ENCODE measurements at regions of chr22 and their contacts with region 1.

Region 1: DNA sequence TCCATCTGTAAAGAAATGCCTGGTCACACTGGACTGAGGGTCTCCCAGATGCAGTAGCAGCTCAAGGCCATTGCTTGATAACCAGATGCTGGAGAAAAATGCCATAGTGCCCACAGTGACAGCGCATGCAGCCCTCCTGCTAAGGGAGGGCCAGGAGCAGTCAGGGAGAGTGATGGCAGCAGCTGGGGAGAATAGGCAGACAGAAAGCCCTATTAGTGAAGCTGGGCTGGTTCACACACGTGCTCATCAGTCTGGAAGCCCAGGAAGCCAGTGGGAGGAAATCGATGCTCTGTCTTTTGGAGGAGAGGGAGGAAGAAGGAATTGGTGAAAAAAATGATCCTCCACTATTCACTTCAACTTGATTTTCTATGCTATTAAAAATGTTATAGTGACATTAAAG is 82.9 kb downstream of the OSBP2 start:
- DNase-seq: no peak
- H3K4me3 ChIP-seq: no peak overlapping the region
- H3K27ac ChIP-seq: no peak overlapping the region
- H3K4me1 ChIP-seq: peaks cover 3% of the 10 kb centered on the region
- H3K27me3 ChIP-seq: no peaks in the 10 kb centered on the region
- CTCF ChIP-seq: no peak
- POLR2A ChIP-seq: no peak

Region 2: GRCh38 chr22:30685178-30685577 is 92.4 kb before region 1 on chr22:
- CTCF ChIA-PET with region 1: no interaction called
- POLR2A ChIA-PET with region 1: no interaction called
- dilution Hi-C with region 1: no loop called
- intact Hi-C with region 1: no loop called
- DNase-seq: no peak
- H3K4me3 ChIP-seq: no peak overlapping the region
- H3K27ac ChIP-seq: no peak overlapping the region
- H3K4me1 ChIP-seq: no peaks in the 10 kb centered on the region
- H3K27me3 ChIP-seq: no peaks in the 10 kb centered on the region
- CTCF ChIP-seq: no peak
- POLR2A ChIP-seq: no peak

Region 3: GRCh38 chr22:30790366-30790765 is 12.8 kb after region 1 on chr22:
- CTCF ChIA-PET with region 1: no interaction called
- POLR2A ChIA-PET with region 1: no interaction called
- dilution Hi-C with region 1: no loop called
- intact Hi-C with region 1: no loop called
- DNase-seq: no peak
- H3K4me3 ChIP-seq: no peak overlapping the region
- H3K27ac ChIP-seq: no peak overlapping the region
- H3K4me1 ChIP-seq: no peaks in the 10 kb centered on the region
- H3K27me3 ChIP-seq: no peaks in the 10 kb centered on the region
- CTCF ChIP-seq: no peak
- POLR2A ChIP-seq: no peak

Region 4: DNA sequence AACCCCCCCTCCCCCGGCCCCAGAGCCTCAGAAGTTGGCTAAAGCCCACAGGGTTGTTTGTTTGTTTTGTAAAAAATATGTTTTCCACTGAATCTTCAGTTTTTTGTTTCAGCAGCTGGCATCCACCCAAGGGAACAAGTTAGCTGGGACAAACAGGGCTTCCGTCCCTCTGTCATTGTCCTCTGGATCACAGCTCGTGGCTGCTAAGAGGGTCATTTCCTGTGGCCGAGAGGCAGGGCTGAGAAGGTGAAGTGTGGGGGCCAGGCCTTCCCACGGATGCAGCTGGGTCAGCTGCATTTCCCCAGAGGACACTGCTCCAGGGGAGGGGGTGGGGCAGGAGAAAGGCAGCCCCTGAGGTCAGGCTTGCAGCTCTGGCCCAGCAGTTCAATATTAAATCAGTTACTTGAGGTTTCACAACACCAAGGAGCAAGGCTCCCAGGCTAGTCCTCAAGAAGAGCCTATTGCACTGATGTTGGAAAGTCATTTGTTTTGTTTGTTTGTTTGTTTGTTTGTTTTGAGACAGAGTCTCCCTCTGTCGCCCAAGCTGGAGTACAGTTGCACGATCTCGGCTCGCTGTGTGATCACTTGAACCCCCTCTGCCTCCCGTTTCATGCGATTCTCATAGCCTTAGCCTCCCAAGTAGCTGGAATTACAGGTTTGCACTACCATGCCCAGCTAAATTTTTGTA is 269.1 kb after region 1 on chr22:
- CTCF ChIA-PET with region 1: no interaction called
- POLR2A ChIA-PET with region 1: no interaction called
- dilution Hi-C with region 1: no loop called
- intact Hi-C with region 1: loop called (anchors 10 kb)
- DNase-seq: peak; percentile 93
- H3K4me3 ChIP-seq: no peak overlapping the region
- H3K27ac ChIP-seq: peak overlapping the region; percentile 79
- H3K4me1 ChIP-seq: peaks cover 32% of the 10 kb centered on the region
- H3K27me3 ChIP-seq: no peaks in the 10 kb centered on the region
- CTCF ChIP-seq: no peak
- POLR2A ChIP-seq: no peak

Measured in endothelial cell of umbilical vein (primary cell).